Mammary epithelial cell (primary cell): ENCODE measurements at regions of chr18 and their contacts with region 1.

Region 1: GRCh38 chr18:25669741-25670140 is 317.8 kb upstream of the ZNF521 start:
- DNase-seq: no peak
- H3K4me3 ChIP-seq: no peak overlapping the region
- H3K27ac ChIP-seq: no peak overlapping the region
- H3K4me1 ChIP-seq: no peaks in the 10 kb centered on the region
- H3K27me3 ChIP-seq: no peaks in the 10 kb centered on the region
- CTCF ChIP-seq: peak in 1 of 2 donors; percentile 13

Region 2: DNA sequence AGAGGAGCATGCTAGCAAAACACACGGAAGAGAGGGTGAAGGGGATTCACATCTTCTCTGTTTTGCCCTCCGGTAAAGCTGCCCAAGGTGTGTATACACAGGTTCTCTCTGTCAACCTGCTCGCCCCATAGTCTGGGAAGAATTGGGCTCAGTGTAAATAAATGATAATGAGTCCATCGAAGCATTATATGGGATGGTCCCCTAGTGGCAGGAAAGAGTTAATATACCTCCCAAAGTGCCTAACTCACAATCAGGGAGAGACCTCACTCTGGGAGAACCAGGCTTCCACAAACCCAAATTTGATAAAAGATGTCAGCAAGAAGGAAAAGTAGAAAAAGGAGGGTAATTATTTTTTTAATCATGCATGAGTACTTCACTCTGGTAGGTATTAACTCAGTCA is 55.6 kb before region 1 on chr18:
- CTCF ChIA-PET with region 1: no interaction called
- dilution Hi-C with region 1: no loop called
- in situ Hi-C with region 1: no loop called
- intact Hi-C with region 1: no loop called
- DNase-seq: no peak
- H3K4me3 ChIP-seq: no peak overlapping the region
- H3K27ac ChIP-seq: no peak overlapping the region
- H3K4me1 ChIP-seq: no peaks in the 10 kb centered on the region
- H3K27me3 ChIP-seq: no peaks in the 10 kb centered on the region
- CTCF ChIP-seq: no peak

Region 3: GRCh38 chr18:25832001-25832604 is 162.4 kb after region 1 on chr18:
- CTCF ChIA-PET with region 1: no interaction called
- dilution Hi-C with region 1: no loop called
- in situ Hi-C with region 1: no loop called
- intact Hi-C with region 1: loop called (anchors 10 kb)
- DNase-seq: peak; percentile 33
- H3K4me3 ChIP-seq: no peak overlapping the region
- H3K27ac ChIP-seq: no peak overlapping the region
- H3K4me1 ChIP-seq: peaks cover 17% of the 10 kb centered on the region
- H3K27me3 ChIP-seq: no peaks in the 10 kb centered on the region
- CTCF ChIP-seq: peak; percentile 83 to 87